ENCODE measurements at regions of chr5 and their contacts with region 1.

Region 1: GRCh38 chr5:88729084-88729828 is 153.7 kb downstream of the MEF2C start:
- DNase-seq: no peak

Region 2: GRCh38 chr5:88785391-88786219 is 56.3 kb after region 1 on chr5:
- intact Hi-C with region 1: loop called (anchors 5 kb)
- DNase-seq: no peak

Region 3: GRCh38 chr5:88826646-88827585 is 97.7 kb after region 1 on chr5:
- intact Hi-C with region 1: loop called (anchors 2 kb)
- DNase-seq: peak; percentile 83

Region 4: GRCh38 chr5:88883059-88883835 is 154.0 kb after region 1 on chr5 and contains the start of gene MEF2C:
- intact Hi-C with region 1: loop called (anchors 5 kb)
- DNase-seq: peak; percentile 87
- total RNA-seq, gene MEF2C: 64.6 TPM

Region 5: DNA sequence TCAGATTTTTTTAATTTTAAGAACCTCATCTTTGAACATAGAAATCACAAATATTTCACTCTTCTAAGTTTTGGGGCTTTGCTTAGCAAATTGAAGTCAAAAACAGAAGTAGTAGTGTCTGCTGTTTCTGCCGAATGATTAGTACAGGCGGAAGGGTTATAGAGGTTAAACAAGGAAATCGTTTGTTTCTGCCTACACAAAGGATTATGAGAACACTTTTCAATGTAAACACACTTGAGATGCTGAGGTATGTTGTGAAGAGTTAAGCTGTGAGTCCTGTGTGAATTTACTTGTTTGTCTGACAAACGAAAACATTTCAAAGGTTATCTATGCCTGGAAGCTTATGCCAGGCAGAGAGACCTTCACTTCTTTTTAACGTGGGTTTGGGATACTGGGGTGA is 1455.5 kb after region 1 on chr5:
- intact Hi-C with region 1: loop called (anchors 2 kb)
- DNase-seq: no peak

Region 6: DNA sequence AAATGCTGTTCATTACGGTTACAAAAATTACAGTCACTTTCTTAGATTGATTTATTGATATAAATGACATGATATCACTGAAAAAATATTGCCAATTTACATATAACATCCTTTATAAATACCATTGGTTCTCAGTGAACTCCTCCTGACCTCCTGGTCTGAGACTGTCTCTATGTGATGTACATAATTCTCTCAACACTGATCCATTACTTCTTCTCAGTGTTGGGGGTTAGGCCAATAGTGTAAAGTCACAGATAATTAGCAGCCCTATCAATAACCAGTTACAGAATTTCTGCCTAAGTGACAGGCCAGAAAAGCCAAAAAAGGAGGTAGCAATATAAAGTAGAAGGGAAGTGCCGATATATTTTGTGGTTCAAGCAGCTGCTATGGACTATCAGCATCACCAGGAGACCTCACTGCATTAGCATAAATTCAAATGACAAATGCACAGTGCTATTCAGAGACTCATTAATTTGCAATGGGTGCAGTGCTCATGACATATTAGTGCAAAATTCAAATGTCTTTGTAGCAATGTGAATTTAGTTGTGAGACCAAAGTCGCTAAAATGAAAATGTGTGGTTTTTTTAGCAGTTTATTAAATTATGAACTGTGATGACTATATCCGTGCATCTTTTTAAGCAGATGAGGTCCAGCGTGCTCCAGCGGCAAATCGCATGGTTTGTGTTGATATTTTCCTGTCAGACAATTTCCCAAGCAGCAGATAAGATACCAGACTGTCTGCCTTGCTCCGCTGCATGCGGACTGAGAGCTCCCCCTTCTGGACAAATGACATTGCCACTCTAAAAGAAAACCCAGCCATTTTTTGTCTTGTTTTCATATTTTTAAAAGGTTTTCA is 1535.7 kb after region 1 on chr5:
- intact Hi-C with region 1: loop called (anchors 5 kb)
- DNase-seq: peak; percentile 76

Measured in cardiac septum (tissue), 1 donor.